GM10248 (cell line): ENCODE measurements at regions of chr19 and their contacts with region 1.

Region 1: GRCh38 chr19:17470068-17470841 is at the start of gene SLC27A1:
- DNase-seq: peak; percentile 93
- CTCF ChIP-seq: no peak

Region 2: DNA sequence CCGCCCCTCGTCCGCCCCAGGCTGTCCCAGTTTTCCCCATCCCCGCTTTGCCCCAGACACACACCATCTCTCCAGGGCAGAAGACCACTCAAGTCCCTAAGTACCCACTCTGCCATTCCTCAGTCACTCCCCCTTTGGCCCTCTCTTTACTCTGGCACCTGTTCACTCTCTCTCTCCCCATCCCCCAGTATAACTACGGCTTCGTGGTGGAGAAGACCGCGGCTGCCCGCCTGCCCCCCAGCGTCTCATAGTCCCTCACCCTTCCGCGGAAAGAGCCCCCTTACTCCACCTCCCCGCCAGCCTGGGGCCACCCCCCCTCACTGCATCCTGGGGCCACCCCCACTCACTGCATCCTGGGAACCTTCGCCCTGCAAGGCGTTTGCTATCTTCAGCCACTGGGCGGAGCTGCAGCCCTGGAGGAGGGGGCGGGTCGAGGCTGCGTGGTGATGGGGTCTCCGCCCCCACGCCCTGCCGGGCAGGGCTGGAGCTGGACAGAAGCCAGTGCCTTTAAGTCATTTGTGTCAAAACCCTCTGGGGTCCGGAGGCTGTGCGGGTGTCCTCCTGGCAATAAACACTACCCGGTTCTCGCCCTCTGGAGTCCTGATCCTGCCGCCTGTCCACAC is 45.4 kb before region 1 on chr19:
- CTCF ChIA-PET with region 1: interaction called, 10 read pairs
- POLR2A ChIA-PET with region 1: no interaction called
- DNase-seq: peak; percentile 66
- CTCF ChIP-seq: peak; percentile 72

Region 3: GRCh38 chr19:17448131-17448967 is 21.9 kb before region 1 on chr19 and contains the start of gene TMEM221:
- CTCF ChIA-PET with region 1: interaction called, 24 read pairs
- POLR2A ChIA-PET with region 1: no interaction called
- DNase-seq: peak; percentile 80
- CTCF ChIP-seq: peak; percentile 35